ENCODE measurements at regions of chr3 and their contacts with region 1.

Region 1: GRCh38 chr3:3129579-3129978 is 2.8 kb downstream of the TRNT1 start:
- DNase-seq: no peak
- CTCF ChIP-seq: no peak

Region 2: GRCh38 chr3:2950159-2950558 is 179.4 kb before region 1 on chr3:
- CTCF ChIA-PET with region 1: no interaction called
- POLR2A ChIA-PET with region 1: no interaction called
- DNase-seq: no peak
- CTCF ChIP-seq: no peak

Region 3: DNA sequence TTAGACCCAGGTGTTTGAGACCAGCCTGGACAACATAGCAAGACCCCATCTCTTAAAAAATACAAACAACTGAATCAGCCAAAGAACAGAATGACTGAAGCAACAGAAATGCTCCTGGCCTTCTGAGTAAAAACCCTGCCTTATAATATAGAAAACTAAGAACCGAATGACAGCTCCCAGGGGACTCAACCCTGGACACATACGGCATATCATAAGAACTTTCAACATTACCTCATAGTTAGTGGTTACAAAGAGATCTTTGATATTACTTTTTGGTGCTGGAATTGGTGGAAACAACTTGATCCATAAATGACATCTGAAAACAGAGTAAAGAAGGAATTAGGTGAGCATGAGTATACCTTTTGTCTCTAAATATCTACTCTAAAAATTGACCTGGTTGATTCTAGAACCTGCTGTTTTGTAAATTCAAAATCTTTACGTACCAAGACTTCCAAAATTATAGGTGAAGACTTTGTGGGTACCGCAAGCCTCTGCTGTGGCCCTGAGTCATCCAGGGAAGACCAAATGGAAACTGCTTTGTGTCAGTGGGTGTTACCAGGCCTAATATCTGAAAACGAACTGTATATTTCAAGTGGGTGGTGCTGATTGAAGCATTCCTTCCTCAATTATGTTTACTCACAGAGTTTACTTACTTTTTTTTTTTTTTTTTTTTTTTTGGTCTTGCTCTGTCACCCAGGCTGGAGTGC is 54.9 kb before region 1 on chr3:
- CTCF ChIA-PET with region 1: no interaction called
- POLR2A ChIA-PET with region 1: no interaction called
- DNase-seq: peak; percentile 26
- CTCF ChIP-seq: no peak

Region 4: DNA sequence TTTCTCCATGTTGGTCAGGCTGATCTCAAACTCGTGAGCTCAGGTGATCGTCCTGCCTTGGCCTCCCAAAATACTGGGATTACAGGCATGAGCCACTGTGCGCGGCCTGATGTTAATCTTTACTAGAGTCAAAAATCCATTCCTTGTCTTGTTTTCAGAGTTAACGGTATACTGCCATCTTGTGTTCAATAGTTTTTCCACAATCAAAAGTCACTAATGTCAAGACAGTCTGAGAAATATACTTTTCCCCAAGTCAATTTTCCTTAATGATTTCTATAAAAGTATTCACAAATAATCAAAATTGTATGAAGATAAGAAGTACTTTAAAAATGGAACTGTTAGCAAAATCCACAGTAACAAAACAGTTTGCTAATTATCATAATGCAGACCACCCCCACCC is 41.4 kb after region 1 on chr3:
- CTCF ChIA-PET with region 1: interaction called, 10 read pairs
- POLR2A ChIA-PET with region 1: no interaction called
- DNase-seq: no peak
- CTCF ChIP-seq: peak; percentile 32

Measured in GM10248 (cell line).